Aorta (tissue), 5 donors: ENCODE measurements at regions of chr19 and their contacts with region 1.

Region 1: GRCh38 chr19:2168619-2169424 is 5.1 kb downstream of the DOT1L start:
- DNase-seq: peak; percentile 98 to 99
- ATAC-seq: peak; percentile 94
- H3K4me3 ChIP-seq: no peak overlapping the region
- H3K27ac ChIP-seq: peak overlapping the region in 1 of 2 donors; percentile 83
- H3K4me1 ChIP-seq: peaks cover 0 to 4% of the 10 kb centered on the region in 2 donors
- H3K27me3 ChIP-seq: no peaks in the 10 kb centered on the region

Region 2: GRCh38 chr19:2186071-2186846 is 17.4 kb after region 1 on chr19:
- intact Hi-C with region 1: loop called in 1 of 2 experiments (anchors 2 kb)
- DNase-seq: peak; percentile 94 to 95
- ATAC-seq: peak; percentile 92
- H3K4me3 ChIP-seq: no peak overlapping the region
- H3K27ac ChIP-seq: peak overlapping the region; percentile 1 to 48
- H3K4me1 ChIP-seq: no peaks in the 10 kb centered on the region
- H3K27me3 ChIP-seq: no peaks in the 10 kb centered on the region